Body of pancreas (tissue), 4 donors: ENCODE measurements at regions of chr6 and their contacts with region 1.

Region 1: GRCh38 chr6:157184202-157185020 is 138.9 kb downstream of the TMEM242 start:
- DNase-seq: peak; percentile 84 to 90 (median 86)
- ATAC-seq: peak; percentile 95
- H3K4me3 ChIP-seq: no peak overlapping the region
- H3K27ac ChIP-seq: peak overlapping the region in 2 of 4 donors; percentile 38 to 40
- H3K4me1 ChIP-seq: peaks cover 25% of the 10 kb centered on the region
- H3K27me3 ChIP-seq: no peaks in the 10 kb centered on the region
- CTCF ChIP-seq: peak; percentile 91 to 96 (median 95)
- POLR2A ChIP-seq: no peak

Region 2: DNA sequence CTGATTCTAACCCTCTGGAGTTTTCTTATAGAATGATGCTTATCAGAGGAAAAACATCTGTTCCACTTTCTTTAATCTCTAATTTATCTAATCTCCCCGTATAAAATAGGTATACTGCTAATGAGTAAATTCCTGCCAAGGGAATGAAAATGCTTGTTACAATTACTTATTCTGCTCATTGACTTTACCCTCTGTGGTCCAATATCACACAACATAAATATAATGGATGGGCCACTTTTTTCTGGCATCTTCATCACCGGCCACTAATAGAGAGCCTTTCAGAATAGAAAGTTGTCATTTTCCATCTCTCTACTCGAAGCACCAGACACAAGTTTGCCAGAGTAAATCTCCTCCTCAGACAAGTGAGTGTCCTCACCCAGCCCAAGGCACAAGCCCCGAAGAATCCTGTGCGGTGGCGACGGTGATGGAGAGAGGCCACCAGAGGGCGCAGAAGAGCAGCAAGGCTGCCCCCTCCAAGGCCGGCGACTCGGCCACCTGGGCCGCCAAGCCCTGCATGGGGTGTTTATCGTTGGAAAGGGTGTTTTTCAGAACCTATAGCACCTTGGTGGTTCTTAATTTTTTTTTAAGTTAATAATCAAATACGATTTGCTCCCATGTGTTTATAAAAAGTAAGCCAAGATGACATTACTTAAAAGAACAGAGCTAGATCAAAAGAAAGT is 620.1 kb before region 1 on chr6:
- intact Hi-C with region 1: loop called (anchors 10 kb)
- DNase-seq: peak; percentile 77 to 84 (median 82)
- ATAC-seq: peak; percentile 92
- H3K4me3 ChIP-seq: no peak overlapping the region
- H3K27ac ChIP-seq: no peak overlapping the region
- H3K4me1 ChIP-seq: peaks cover 3% of the 10 kb centered on the region
- H3K27me3 ChIP-seq: no peaks in the 10 kb centered on the region
- CTCF ChIP-seq: peak; percentile 85 to 94 (median 90)
- POLR2A ChIP-seq: no peak

Region 3: DNA sequence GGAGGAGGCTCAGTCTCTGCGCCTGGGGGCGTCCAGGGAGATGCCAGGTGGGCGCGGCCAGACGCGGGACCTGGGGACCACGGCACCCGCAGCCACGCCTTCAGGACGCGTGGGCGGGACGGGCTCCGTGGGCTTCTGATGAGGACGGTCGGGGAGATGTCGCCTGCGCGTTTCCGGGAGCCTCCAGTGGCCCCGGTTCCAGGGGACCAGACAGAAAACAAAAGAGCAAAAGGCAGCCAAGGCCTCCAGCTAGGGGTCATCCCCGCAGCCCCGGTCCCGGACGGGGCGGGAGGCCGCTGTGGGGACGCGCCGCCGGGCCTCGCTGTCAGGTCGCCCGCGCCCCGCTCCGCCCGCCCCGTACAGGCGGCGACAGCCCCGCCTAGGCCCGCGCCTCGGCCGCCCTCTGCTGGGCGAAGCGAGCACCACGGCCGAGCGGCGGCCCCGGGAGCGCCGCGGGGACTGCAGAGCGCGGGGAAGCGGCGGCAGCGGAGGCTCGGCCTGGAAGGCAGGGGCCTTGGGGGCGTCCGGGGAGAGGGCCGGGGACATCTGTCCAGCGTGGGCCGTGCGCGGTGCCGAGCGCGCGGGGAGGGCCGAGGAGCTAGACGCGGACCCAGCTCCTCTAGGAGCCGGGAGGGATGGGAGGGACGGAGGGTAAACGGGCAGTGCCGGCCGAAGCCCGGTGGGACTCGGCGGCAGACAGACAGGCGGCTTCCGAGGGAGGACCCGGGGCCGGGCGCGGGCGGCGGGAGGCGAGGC is 90.2 kb after region 1 on chr6:
- intact Hi-C with region 1: loop called (anchors 10 kb)
- DNase-seq: peak; percentile 65 to 80 (median 72)
- ATAC-seq: peak; percentile 97
- H3K4me3 ChIP-seq: peak overlapping the region; percentile 7 to 48
- H3K27ac ChIP-seq: peak overlapping the region; percentile 28 to 78 (median 54)
- H3K4me1 ChIP-seq: peaks cover 13% of the 10 kb centered on the region
- H3K27me3 ChIP-seq: no peaks in the 10 kb centered on the region
- CTCF ChIP-seq: peak; percentile 21 to 97 (median 95)
- POLR2A ChIP-seq: peak; percentile 23 to 36 (median 28)